ENCODE measurements at regions of chr16 and their contacts with region 1.

Region 1: DNA sequence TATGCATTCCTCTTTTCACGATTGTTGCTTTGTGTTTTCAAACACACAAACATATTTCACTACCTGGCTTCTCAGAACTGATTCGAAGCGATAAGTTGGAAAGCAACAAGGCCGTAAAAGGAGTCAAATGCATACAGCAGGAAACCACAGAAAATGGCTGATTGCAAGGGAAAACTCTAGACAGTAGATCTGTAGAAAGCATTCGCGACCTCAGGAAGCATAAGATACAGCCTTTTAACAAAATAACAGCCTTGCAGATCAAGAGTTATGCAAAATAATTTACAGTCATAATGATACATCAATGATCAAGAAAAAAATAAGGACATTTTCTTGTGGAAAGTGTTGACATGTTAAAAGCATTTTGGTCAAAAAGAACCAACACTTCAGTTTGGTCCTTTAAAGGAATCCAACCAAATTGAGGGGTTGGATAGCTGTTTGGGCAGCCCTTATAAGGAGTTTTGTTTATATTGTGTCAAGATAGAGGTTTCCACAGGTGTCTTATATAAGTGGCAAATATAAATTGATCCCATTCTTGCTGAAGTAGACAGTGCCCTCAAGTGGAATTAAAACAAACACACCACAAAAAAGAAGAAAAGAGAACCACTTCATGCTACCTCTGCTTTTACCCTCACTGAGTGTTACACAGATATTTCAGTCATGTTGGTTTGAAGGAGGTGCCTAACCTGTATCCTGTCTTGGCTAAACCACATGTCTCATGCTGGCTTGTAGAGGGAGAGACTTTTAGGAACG is 5.5 kb downstream of the CYLD start:
- DNase-seq: no peak
- H3K4me3 Mint-ChIP-seq: peak overlapping the region; percentile 73
- H3K27ac Mint-ChIP-seq: peak overlapping the region; percentile 97
- H3K4me1 Mint-ChIP-seq: peaks cover 64% of the 10 kb centered on the region
- H3K27me3 Mint-ChIP-seq: no peaks in the 10 kb centered on the region

Region 2: GRCh38 chr16:50335196-50335958 is 412.0 kb before region 1 on chr16:
- CTCF ChIA-PET with region 1: no interaction called
- POLR2A ChIA-PET with region 1: no interaction called
- intact Hi-C with region 1: loop called (anchors 1 kb)
- DNase-seq: peak; percentile 70
- H3K4me3 Mint-ChIP-seq: peak overlapping the region; percentile 32
- H3K27ac Mint-ChIP-seq: peak overlapping the region; percentile 90
- H3K4me1 Mint-ChIP-seq: peaks cover 68% of the 10 kb centered on the region
- H3K27me3 Mint-ChIP-seq: no peaks in the 10 kb centered on the region

Region 3: GRCh38 chr16:50548125-50548908 is 199.1 kb before region 1 on chr16 and contains the start of gene NKD1:
- CTCF ChIA-PET with region 1: interaction called, 3 read pairs
- POLR2A ChIA-PET with region 1: no interaction called
- intact Hi-C with region 1: loop called (anchors 2 kb)
- DNase-seq: peak; percentile 80
- H3K4me3 Mint-ChIP-seq: peak within 1 kb of the TSS; percentile 84
- H3K27ac Mint-ChIP-seq: peak within 1 kb of the TSS; percentile 9
- H3K4me1 Mint-ChIP-seq: peaks cover 7% of the 10 kb centered on the region
- H3K27me3 Mint-ChIP-seq: no peaks in the 10 kb centered on the region
- total RNA-seq, gene NKD1: 0.67 to 1.6 TPM

Region 4: GRCh38 chr16:50681021-50681885 is 66.1 kb before region 1 on chr16 and contains the start of gene SNX20:
- CTCF ChIA-PET with region 1: interaction called, 71 read pairs
- POLR2A ChIA-PET with region 1: interaction called, 37 read pairs
- intact Hi-C with region 1: loop called (anchors 1 kb)
- DNase-seq: peak; percentile 79
- H3K4me3 Mint-ChIP-seq: peak within 1 kb of the TSS; percentile 89
- H3K27ac Mint-ChIP-seq: peak within 1 kb of the TSS; percentile 91
- H3K4me1 Mint-ChIP-seq: peaks cover 85% of the 10 kb centered on the region
- H3K27me3 Mint-ChIP-seq: no peaks in the 10 kb centered on the region
- total RNA-seq, gene SNX20: 55.4 to 56.9 TPM

Region 5: DNA sequence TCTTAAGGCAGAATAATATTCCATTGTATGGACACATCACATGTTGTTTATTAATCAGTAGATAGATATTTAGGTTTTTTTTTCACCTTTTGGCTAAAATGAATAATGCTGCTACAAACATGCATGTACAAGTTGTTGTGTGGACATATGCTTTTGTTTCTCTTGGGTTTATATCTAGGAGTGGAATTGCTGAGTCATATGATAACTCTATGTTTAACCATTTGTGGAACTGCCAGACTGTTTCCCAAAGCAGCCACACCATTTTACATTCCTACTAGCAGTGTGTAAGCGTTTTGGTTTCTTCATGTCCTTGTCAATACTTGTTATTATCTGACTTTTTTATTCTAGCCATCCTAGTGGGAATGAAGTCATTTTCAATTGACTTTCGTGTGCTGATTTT is 15.8 kb after region 1 on chr16:
- CTCF ChIA-PET with region 1: interaction called, 9 read pairs
- POLR2A ChIA-PET with region 1: interaction called, 15 read pairs
- intact Hi-C with region 1: loop called (anchors 1 kb)
- DNase-seq: no peak
- H3K4me3 Mint-ChIP-seq: no peak overlapping the region
- H3K27ac Mint-ChIP-seq: peak overlapping the region; percentile 43
- H3K4me1 Mint-ChIP-seq: peaks cover 89% of the 10 kb centered on the region
- H3K27me3 Mint-ChIP-seq: no peaks in the 10 kb centered on the region

Region 6: GRCh38 chr16:51062039-51062438 is 314.7 kb after region 1 on chr16:
- CTCF ChIA-PET with region 1: no interaction called
- POLR2A ChIA-PET with region 1: no interaction called
- intact Hi-C with region 1: no loop called
- DNase-seq: no peak
- H3K4me3 Mint-ChIP-seq: no peak overlapping the region
- H3K27ac Mint-ChIP-seq: no peak overlapping the region
- H3K4me1 Mint-ChIP-seq: no peaks in the 10 kb centered on the region
- H3K27me3 Mint-ChIP-seq: no peaks in the 10 kb centered on the region

Region 7: GRCh38 chr16:51621610-51622009 is 874.2 kb after region 1 on chr16:
- CTCF ChIA-PET with region 1: no interaction called
- POLR2A ChIA-PET with region 1: no interaction called
- intact Hi-C with region 1: no loop called
- DNase-seq: no peak
- H3K4me3 Mint-ChIP-seq: no peak overlapping the region
- H3K27ac Mint-ChIP-seq: no peak overlapping the region
- H3K4me1 Mint-ChIP-seq: no peaks in the 10 kb centered on the region
- H3K27me3 Mint-ChIP-seq: no peaks in the 10 kb centered on the region